Heart left ventricle (tissue), 16 donors: ENCODE measurements at regions of chr1 and their contacts with region 1.

Region 1: DNA sequence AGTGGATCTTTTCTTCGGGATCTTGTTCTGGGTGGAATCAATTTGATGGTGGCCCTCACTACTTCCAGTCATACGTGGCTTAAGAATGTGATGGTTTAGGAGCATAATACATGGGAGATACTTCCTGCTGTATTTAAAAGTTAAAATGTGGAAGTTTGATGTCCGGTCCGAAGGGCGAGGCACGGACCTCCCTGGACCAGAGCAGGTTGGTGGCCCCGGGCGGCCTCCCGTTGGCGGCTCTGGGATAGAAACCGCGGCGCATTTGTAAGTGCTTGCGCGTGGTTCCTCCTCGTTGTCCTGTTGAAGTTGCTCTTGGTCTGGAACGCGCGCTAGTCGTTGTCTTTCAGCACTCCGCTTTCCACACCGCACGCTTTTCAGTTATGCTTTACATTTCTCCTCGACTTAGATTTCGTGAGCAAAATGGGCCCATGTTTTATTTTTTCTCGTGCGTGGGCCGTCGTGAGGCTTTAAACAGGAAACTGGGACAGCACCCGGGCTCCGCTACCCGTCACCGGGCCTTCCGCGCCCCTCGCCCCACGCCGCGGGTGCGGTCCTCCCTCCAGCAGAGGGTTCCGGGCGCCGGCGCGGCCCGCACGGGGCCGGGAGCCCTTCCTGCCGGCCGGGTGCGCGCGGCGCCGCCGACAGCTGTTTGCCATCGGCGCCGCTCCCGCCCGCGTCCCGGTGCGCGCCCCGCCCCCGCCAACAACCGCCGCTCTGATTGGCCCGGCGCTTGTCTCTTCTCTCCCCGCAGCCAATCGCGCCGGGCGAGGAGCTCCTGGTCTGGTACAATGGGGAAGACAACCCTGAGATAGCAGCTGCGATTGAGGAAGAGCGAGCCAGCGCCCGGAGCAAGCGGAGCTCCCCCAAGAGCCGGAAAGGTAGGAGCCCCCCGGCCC is 48.9 kb downstream of the PRDM2 start:
- DNase-seq: peak; percentile 97 to 99 (median 98)
- ATAC-seq: peak; percentile 97 to 99 (median 99)
- H3K4me3 ChIP-seq: peak overlapping the region; percentile 73 to 96 (median 91)
- H3K27ac ChIP-seq: peak overlapping the region; percentile 81 to 97 (median 94)
- H3K4me1 ChIP-seq: peaks cover 3 to 46% (median 27%) of the 10 kb centered on the region in 12 donors
- H3K27me3 ChIP-seq: no peaks in the 10 kb centered on the region
- CTCF ChIP-seq: peak in 4 of 12 donors; percentile 13 to 46 (median 32)
- POLR2A ChIP-seq: peak in 1 of 2 donors; percentile 92

Region 2: GRCh38 chr1:13699936-13700520 is 48.8 kb before region 1 on chr1 and contains the start of gene PRDM2:
- intact Hi-C with region 1: loop called in 3 of 10 experiments (anchors 5 to 10 kb)
- DNase-seq: peak; percentile 40 to 84 (median 52)
- ATAC-seq: peak; percentile 37 to 86 (median 76)
- H3K4me3 ChIP-seq: peak within 1 kb of the TSS; percentile 71 to 99 (median 84)
- H3K27ac ChIP-seq: peak within 1 kb of the TSS; percentile 76 to 95 (median 90)
- H3K4me1 ChIP-seq: peaks cover 0 to 25% (median 7%) of the 10 kb centered on the region in 12 donors
- H3K27me3 ChIP-seq: peaks cover 0 to 6% (median 0%) of the 10 kb centered on the region in 9 donors
- CTCF ChIP-seq: no peak
- POLR2A ChIP-seq: no peak
- total RNA-seq, gene PRDM2: 22.8 to 52.7 (median 38.8) TPM

Region 3: GRCh38 chr1:13792419-13792818 is 43.6 kb after region 1 on chr1:
- intact Hi-C with region 1: loop called in 3 of 10 experiments (anchors 2 to 5 kb)
- DNase-seq: no peak
- ATAC-seq: peak; percentile 34 to 68 (median 58)
- H3K4me3 ChIP-seq: no peak overlapping the region
- H3K27ac ChIP-seq: peak overlapping the region in 11 of 12 donors; percentile 10 to 77 (median 50)
- H3K4me1 ChIP-seq: peaks cover 0 to 29% (median 6%) of the 10 kb centered on the region in 12 donors
- H3K27me3 ChIP-seq: no peaks in the 10 kb centered on the region
- CTCF ChIP-seq: no peak
- POLR2A ChIP-seq: no peak

Region 4: GRCh38 chr1:13807213-13807612 is 58.4 kb after region 1 on chr1:
- intact Hi-C with region 1: loop called in 1 of 10 experiments (anchors 10 kb)
- DNase-seq: no peak
- ATAC-seq: no peak
- H3K4me3 ChIP-seq: no peak overlapping the region
- H3K27ac ChIP-seq: no peak overlapping the region
- H3K4me1 ChIP-seq: peaks cover 0 to 8% (median 2%) of the 10 kb centered on the region in 12 donors
- H3K27me3 ChIP-seq: no peaks in the 10 kb centered on the region
- CTCF ChIP-seq: peak in 3 of 12 donors; percentile 19 to 30 (median 21)
- POLR2A ChIP-seq: no peak

Region 5: DNA sequence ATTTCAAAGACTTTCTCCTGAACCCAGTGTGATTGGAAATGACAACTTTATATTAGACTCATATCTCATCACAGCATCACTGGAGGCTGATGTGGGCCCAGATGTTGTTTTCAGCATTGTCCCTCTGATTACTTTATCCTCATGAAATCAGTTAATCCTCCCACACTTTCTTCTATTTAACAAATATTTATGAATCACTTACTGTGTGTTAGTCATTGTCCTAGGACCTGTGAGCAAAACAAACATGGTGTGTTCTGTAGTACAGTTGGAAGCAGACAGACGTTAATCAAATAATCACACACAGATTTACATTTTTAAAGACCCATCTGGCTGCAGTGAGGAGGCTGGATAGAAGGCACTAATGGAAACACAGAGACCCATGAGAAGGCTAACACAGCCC is 334.8 kb after region 1 on chr1:
- intact Hi-C with region 1: no loop called
- DNase-seq: no peak
- ATAC-seq: no peak
- H3K4me3 ChIP-seq: no peak overlapping the region
- H3K27ac ChIP-seq: no peak overlapping the region
- H3K4me1 ChIP-seq: no peaks in the 10 kb centered on the region
- H3K27me3 ChIP-seq: no peaks in the 10 kb centered on the region
- CTCF ChIP-seq: no peak
- POLR2A ChIP-seq: no peak